ENCODE measurements at regions of chr19 and their contacts with region 1.

Region 1: DNA sequence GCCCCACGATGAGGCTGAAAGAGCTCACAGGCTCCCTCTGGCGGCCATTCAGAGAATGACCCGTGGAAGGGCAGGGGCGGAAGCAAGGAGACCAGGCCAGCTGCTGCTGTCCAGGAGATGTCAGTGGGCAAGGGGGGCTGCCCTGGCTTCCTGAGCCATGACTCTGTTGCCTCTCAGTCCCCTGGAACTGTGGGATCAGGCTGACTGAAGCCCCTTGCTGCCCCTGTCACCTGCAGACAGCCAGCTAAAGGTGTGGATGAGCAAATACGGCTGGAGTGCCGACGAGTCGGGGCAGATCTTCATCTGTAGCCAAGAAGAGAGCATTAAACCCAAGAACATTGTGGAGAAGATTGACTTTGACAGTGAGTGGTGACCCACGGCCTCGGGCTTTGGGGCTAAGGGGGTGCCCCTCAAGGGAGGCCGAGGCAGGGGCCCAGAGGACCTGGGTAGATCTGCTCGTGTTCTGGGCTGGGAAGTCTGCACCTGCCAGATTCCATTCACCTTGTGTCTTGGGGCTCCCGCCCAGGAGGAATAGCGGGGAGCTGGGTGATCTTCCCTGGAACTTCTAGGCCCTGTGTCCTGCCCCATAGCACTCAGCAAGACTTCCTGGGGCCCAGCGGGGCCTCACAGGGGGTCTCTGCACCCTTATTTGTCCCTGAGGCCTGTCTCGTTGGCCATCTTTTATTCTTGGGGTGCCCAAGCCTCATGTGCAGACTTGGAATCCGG is 12.5 kb upstream of the ACTN4 start:
- DNase-seq: peak; percentile 84
- ATAC-seq: peak; percentile 23; the same call in 1 of the 2 replicates
- H3K4me3 Mint-ChIP-seq: no peak overlapping the region
- H3K27ac Mint-ChIP-seq: peak overlapping the region; percentile 91
- H3K4me1 Mint-ChIP-seq: peaks cover 34% of the 10 kb centered on the region
- H3K27me3 Mint-ChIP-seq: no peaks in the 10 kb centered on the region
- CTCF ChIP-seq: peak; percentile 97

Region 2: GRCh38 chr19:38496603-38497487 is 138.1 kb before region 1 on chr19:
- CTCF ChIA-PET with region 1: no interaction called
- POLR2A ChIA-PET with region 1: no interaction called
- DNase-seq: no peak
- ATAC-seq: peak; percentile 18; the same call in 1 of the 2 replicates
- H3K4me3 Mint-ChIP-seq: no peak overlapping the region
- H3K27ac Mint-ChIP-seq: peak overlapping the region; percentile 57; the same call in 1 of the 2 replicates
- H3K4me1 Mint-ChIP-seq: peaks cover 15% of the 10 kb centered on the region
- H3K27me3 Mint-ChIP-seq: no peaks in the 10 kb centered on the region
- CTCF ChIP-seq: no peak

Region 3: DNA sequence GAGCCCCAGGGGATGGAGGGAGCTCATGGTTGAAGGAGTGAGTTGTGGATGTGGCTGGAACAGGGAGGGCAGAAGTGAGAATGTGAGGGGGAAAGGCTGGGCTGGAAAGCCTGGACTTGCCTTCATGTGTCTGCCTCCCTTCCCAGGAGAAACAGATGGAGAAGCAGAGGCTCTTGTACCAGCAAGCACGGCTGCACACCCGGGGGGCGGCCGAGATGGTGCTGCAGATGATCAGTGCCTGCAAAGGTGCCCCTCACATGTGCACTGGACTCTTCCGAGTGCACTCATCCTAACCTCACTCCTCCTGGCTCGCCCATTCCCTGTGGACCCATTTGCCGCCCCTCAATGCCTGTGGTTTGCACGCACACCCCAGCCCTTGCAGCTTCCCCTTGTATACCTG is 100.3 kb before region 1 on chr19:
- CTCF ChIA-PET with region 1: no interaction called
- POLR2A ChIA-PET with region 1: no interaction called
- DNase-seq: no peak
- ATAC-seq: no peak
- H3K4me3 Mint-ChIP-seq: no peak overlapping the region
- H3K27ac Mint-ChIP-seq: no peak overlapping the region
- H3K4me1 Mint-ChIP-seq: no peaks in the 10 kb centered on the region
- H3K27me3 Mint-ChIP-seq: peaks cover 4% of the 10 kb centered on the region; the same call in 1 of the 2 replicates
- CTCF ChIP-seq: no peak

Region 4: DNA sequence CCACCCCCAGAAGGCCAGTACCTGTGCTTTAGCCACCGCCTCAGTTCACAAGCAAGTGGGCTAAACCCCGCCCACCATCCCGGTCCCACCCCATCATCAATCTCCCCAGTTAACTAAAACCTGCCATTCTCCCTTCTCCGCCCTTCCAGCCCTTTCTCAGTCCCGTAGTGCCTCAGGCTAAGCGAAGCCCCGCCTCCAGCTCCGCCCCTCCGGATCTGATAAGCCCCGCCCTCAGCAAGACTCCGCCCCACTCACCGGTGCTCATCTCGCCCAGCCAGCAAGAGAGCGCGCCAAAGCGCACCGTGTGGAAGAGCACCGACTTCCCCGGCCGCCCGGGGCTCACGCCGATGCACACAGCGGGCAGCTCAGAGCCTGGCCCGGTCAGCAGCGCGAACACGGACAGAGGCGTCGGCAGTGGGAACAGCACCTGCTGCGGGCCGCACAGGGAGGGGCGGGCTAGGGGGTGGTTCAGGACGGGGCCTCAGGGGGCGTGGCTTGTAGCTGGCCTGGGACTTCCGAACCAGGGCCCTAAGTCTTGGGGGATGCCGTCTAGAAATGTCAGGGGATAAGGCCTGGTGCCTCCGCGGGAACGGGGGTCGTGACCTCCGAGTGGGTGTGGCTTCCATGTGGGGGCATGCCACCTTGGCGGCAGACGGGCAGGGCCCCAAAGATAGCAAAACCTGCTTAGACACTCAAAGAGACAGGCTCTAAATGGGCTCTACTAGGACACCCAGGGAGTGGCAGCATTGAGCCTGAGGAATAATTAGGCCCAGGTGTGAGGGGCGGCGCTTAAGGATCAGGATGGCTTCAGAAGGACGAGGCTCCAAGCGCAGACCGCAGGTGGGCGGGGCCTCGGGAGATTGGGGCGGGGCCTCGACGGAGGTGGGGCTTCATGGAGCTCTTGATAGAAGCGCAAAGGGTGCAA is 38.6 kb before region 1 on chr19:
- CTCF ChIA-PET with region 1: interaction called, 15 read pairs
- POLR2A ChIA-PET with region 1: no interaction called
- DNase-seq: peak; percentile 98
- ATAC-seq: peak; percentile 90
- H3K4me3 Mint-ChIP-seq: peak overlapping the region; percentile 91
- H3K27ac Mint-ChIP-seq: peak overlapping the region; percentile 98
- H3K4me1 Mint-ChIP-seq: peaks cover 8% of the 10 kb centered on the region
- H3K27me3 Mint-ChIP-seq: peaks cover 7% of the 10 kb centered on the region; the same call in 1 of the 2 replicates
- CTCF ChIP-seq: no peak

Region 5: GRCh38 chr19:38618590-38619360 is 16.1 kb before region 1 on chr19 and contains the start of gene EIF3K:
- CTCF ChIA-PET with region 1: interaction called, 23 read pairs
- POLR2A ChIA-PET with region 1: interaction called, 7 read pairs
- DNase-seq: peak; percentile 99
- ATAC-seq: peak; percentile 85
- H3K4me3 Mint-ChIP-seq: peak within 1 kb of the TSS; percentile 100
- H3K27ac Mint-ChIP-seq: peak within 1 kb of the TSS; percentile 99
- H3K4me1 Mint-ChIP-seq: peaks cover 45% of the 10 kb centered on the region
- H3K27me3 Mint-ChIP-seq: no peaks in the 10 kb centered on the region; the same call in 1 of the 2 replicates
- CTCF ChIP-seq: no peak
- total RNA-seq, gene EIF3K: 389 to 416 TPM (median 410 TPM) in 3 replicates

Region 6: GRCh38 chr19:38647368-38647965 is 12.5 kb after region 1 on chr19 and contains the start of gene ACTN4:
- CTCF ChIA-PET with region 1: interaction called, 101 read pairs
- POLR2A ChIA-PET with region 1: interaction called, 6 read pairs
- DNase-seq: peak; percentile 100
- ATAC-seq: peak; percentile 83
- H3K4me3 Mint-ChIP-seq: peak within 1 kb of the TSS; percentile 94
- H3K27ac Mint-ChIP-seq: peak within 1 kb of the TSS; percentile 93
- H3K4me1 Mint-ChIP-seq: peaks cover 52% of the 10 kb centered on the region
- H3K27me3 Mint-ChIP-seq: no peaks in the 10 kb centered on the region
- CTCF ChIP-seq: no peak
- total RNA-seq, gene ACTN4: 484 to 511 TPM (median 506 TPM) in 3 replicates

Region 7: GRCh38 chr19:38666663-38667511 is 32.0 kb after region 1 on chr19:
- CTCF ChIA-PET with region 1: interaction called, 15 read pairs
- POLR2A ChIA-PET with region 1: interaction called, 4 read pairs
- DNase-seq: no peak
- ATAC-seq: peak; percentile 34
- H3K4me3 Mint-ChIP-seq: peak overlapping the region; percentile 34
- H3K27ac Mint-ChIP-seq: peak overlapping the region; percentile 100
- H3K4me1 Mint-ChIP-seq: peaks cover 98% of the 10 kb centered on the region
- H3K27me3 Mint-ChIP-seq: no peaks in the 10 kb centered on the region
- CTCF ChIP-seq: no peak

Region 8: DNA sequence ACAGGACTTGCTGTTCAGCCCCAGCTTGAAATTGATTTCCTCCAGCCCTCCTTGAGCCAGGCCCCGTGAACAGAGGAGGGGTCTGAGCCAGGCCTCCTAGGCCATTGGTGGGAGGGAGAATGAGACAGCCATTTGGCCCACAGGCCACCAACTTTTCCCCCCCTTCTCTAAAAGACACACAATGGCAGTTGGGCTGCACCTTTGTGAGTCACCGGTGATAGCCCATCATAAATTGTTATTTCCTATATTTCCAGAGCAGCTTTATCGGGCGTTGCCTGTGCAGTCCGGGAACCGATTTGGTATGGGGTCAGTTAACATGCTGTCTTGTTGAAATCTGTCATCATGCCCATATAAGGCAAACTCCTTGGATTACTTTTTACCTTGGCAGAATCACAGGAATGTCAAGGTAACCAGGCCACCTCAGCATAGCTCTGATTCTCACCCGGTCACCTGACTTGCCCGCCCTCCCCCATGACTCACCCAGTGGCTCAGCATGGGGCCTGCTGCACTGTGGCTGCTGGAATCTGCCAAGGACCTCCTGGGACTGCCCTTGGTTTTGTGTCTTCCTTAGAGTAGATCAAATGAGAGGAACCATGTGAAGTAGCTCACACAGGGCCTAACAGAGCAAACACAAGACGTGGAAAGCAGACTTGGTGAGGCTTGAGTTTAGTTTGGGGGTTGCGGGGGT is 48.6 kb after region 1 on chr19:
- CTCF ChIA-PET with region 1: interaction called, 12 read pairs
- POLR2A ChIA-PET with region 1: interaction called, 7 read pairs
- DNase-seq: peak; percentile 81
- ATAC-seq: peak; percentile 67
- H3K4me3 Mint-ChIP-seq: peak overlapping the region; percentile 40; the same call in 1 of the 2 replicates
- H3K27ac Mint-ChIP-seq: peak overlapping the region; percentile 99
- H3K4me1 Mint-ChIP-seq: peaks cover 78% of the 10 kb centered on the region
- H3K27me3 Mint-ChIP-seq: no peaks in the 10 kb centered on the region
- CTCF ChIP-seq: no peak

Region 9: GRCh38 chr19:38699647-38700349 is 64.9 kb after region 1 on chr19:
- CTCF ChIA-PET with region 1: interaction called, 10 read pairs
- POLR2A ChIA-PET with region 1: interaction called, 3 read pairs
- DNase-seq: no peak
- ATAC-seq: no peak
- H3K4me3 Mint-ChIP-seq: no peak overlapping the region
- H3K27ac Mint-ChIP-seq: peak overlapping the region; percentile 80
- H3K4me1 Mint-ChIP-seq: peaks cover 39% of the 10 kb centered on the region
- H3K27me3 Mint-ChIP-seq: no peaks in the 10 kb centered on the region
- CTCF ChIP-seq: no peak

Region 10: GRCh38 chr19:38899447-38900219 is 264.7 kb after region 1 on chr19 and contains the starts of genes NFKBIB and SIRT2:
- CTCF ChIA-PET with region 1: no interaction called
- POLR2A ChIA-PET with region 1: no interaction called
- DNase-seq: peak; percentile 99
- ATAC-seq: peak; percentile 97
- H3K4me3 Mint-ChIP-seq: peak within 1 kb of the TSS; percentile 87
- H3K27ac Mint-ChIP-seq: peak within 1 kb of the TSS; percentile 94
- H3K4me1 Mint-ChIP-seq: peaks cover 12% of the 10 kb centered on the region
- H3K27me3 Mint-ChIP-seq: peaks cover 24% of the 10 kb centered on the region
- CTCF ChIP-seq: no peak
- total RNA-seq, gene NFKBIB: 29.6 to 39.8 TPM (median 30.6 TPM) in 3 replicates
- total RNA-seq, gene SIRT2: 9.5 to 10.7 TPM (median 10.2 TPM) in 3 replicates